ENCODE measurements at regions of chr17 and their contacts with region 1.

Region 1: GRCh38 chr17:68260051-68260762 is 12.4 kb downstream of the AMZ2 start:
- DNase-seq: no peak
- H3K4me3 ChIP-seq: no peak overlapping the region
- H3K27ac ChIP-seq: no peak overlapping the region
- H3K4me1 ChIP-seq: peaks cover 10% of the 10 kb centered on the region; the same call in 1 of the 2 replicates
- H3K27me3 ChIP-seq: no peaks in the 10 kb centered on the region
- CTCF ChIP-seq: no peak

Region 2: DNA sequence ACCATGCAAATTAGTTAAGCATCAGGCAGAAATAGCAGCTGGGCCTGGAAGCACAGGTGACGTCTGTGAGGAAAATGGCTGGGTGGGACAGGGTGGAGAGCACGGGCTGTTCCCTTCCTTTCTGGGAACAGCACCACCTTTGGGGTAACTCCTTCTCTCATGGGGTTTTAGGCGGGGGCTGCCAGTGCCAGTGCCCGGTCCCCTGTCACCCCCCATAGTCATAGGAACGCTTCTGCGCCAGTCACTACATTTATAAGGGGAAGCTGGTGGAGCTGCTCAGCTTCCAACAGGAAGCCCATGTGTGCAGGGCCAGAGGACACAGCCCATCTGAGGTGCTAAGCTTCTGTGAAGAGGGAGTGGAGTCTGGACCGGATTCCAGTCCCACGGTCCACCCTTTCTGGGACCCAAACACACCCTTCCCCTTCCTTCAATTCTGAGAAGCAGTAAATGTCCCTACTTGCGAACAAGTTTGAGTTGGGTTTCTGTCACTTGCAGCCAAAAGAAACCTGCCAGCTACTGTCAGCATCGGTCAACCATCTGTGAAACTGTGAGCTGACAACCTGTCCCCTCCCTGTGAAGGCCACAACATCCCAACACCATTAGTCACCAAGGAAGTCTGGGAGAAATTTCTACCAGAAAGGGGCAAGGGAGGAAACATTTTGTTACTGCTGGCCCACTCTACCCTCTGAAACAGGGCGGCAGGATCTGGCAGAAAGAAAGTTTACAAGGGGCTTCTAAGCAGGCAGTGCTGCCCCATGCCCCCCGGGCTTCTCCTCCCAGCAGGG is 98.4 kb before region 1 on chr17:
- CTCF ChIA-PET with region 1: no interaction called
- POLR2A ChIA-PET with region 1: no interaction called
- intact Hi-C with region 1: no loop called
- DNase-seq: peak; percentile 35 to 72
- H3K4me3 ChIP-seq: no peak overlapping the region
- H3K27ac ChIP-seq: peak overlapping the region; percentile 45
- H3K4me1 ChIP-seq: peaks cover 13% of the 10 kb centered on the region
- H3K27me3 ChIP-seq: no peaks in the 10 kb centered on the region
- CTCF ChIP-seq: no peak

Region 3: DNA sequence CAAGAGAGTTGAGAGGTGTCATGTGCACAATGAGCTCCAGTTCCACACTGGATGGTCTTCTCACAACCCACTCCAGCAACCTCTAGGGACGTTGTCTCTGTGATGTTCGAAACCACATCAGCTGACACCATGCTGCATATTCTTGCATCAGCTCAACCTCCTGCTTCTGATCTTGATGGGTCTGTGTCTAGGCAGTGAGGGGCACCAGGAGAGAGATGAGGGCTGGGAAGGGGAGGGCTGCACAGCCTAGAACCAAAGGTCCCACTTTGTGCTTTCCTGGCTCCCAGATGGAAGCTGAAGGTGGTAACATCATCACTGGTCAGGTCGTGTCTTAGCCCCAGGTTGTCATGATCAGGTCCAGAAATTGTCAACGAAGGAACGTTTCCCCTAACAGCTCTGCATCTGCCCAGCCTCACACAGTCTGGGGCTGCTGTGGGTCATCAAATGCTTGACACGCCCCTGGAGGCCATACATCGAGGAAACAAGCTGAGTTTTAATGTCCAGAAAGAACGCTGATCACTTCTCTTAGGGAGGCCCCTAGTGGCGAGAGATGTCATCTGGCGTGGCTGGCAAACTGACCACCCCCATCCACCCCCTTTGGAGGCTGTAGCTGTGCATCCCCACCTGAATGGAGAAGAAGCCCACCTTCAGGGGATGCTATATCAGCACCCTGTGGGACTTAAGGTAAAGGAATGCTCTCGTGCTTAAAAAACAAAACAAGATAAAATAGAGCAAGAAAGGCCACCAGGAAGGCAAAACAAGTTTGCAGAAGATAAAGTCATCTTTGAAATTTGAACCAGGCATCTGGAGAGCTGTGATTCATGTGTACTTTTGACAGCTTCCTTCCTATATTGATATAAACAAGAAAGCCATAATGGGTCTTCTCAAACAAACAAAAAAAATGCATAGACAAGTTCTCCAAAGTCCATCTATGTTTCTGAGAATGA is 138.8 kb after region 1 on chr17:
- CTCF ChIA-PET with region 1: interaction called, 17 read pairs
- POLR2A ChIA-PET with region 1: no interaction called
- intact Hi-C with region 1: loop called (anchors 1 kb)
- DNase-seq: peak; percentile 68 to 73
- H3K4me3 ChIP-seq: no peak overlapping the region
- H3K27ac ChIP-seq: no peak overlapping the region
- H3K4me1 ChIP-seq: peaks cover 18% of the 10 kb centered on the region
- H3K27me3 ChIP-seq: no peaks in the 10 kb centered on the region
- CTCF ChIP-seq: peak; percentile 91

Measured in PC-9 (cell line).